Common myeloid progenitor, CD34-positive (primary cell): ENCODE measurements at regions of chr18 and their contacts with region 1.

Region 1: DNA sequence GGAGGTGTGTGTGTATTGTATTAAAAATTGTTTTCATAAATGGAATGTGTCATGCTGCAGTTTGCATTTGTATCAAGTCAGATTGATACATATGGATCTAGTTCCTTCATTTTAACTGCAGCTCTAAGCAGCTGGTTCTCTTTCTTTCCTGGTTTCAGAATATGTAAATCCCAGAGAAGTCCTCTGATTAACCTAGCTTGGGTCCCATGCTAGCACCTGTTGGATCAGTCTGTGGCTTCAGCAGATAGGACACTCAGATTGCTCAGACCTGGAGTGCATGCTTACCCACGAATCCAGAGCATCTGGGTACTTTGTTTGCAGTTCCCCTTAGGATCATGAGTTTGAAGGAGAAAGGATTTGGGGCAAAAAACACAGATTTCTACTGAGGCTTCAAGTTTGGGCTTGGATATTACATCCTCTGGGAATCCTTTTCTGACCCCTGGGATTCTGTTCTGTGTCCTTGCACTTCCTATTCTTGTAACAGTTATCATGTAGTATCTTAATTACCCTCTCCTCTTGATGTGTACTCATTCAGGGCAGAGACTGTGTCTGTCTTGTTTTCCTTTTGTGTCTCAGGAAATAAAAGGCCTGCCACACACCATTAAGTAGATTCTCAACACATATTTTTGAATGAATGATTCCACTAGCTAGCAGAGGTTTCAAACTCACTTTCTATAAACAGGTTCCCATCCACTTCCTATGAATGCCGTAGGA is 142.1 kb downstream of the PHLPP1 start:
- DNase-seq: no peak
- H3K4me3 ChIP-seq: no peak overlapping the region
- H3K27ac ChIP-seq: no peak overlapping the region
- H3K4me1 ChIP-seq: peaks cover 0 to 28% (median 13%) of the 10 kb centered on the region in 4 experiments
- H3K27me3 ChIP-seq: no peaks in the 10 kb centered on the region

Region 2: GRCh38 chr18:62584241-62585120 is 272.9 kb before region 1 on chr18:
- CTCF ChIA-PET with region 1: no interaction called
- POLR2A ChIA-PET with region 1: no interaction called
- DNase-seq: peak; percentile 92 to 96 (median 94)
- H3K4me3 ChIP-seq: peak overlapping the region in 5 of 7 experiments; percentile 46 to 79 (median 57)
- H3K27ac ChIP-seq: no peak overlapping the region
- H3K4me1 ChIP-seq: peaks cover 0 to 20% (median 13%) of the 10 kb centered on the region in 4 experiments
- H3K27me3 ChIP-seq: no peaks in the 10 kb centered on the region

Region 3: GRCh38 chr18:62714671-62715435 is 142.6 kb before region 1 on chr18:
- CTCF ChIA-PET with region 1: no interaction called
- POLR2A ChIA-PET with region 1: no interaction called
- DNase-seq: peak; percentile 100
- H3K4me3 ChIP-seq: peak overlapping the region; percentile 58 to 95 (median 85)
- H3K27ac ChIP-seq: peak overlapping the region; percentile 70 to 72
- H3K4me1 ChIP-seq: peaks cover 13 to 36% (median 25%) of the 10 kb centered on the region in 4 experiments
- H3K27me3 ChIP-seq: no peaks in the 10 kb centered on the region

Region 4: DNA sequence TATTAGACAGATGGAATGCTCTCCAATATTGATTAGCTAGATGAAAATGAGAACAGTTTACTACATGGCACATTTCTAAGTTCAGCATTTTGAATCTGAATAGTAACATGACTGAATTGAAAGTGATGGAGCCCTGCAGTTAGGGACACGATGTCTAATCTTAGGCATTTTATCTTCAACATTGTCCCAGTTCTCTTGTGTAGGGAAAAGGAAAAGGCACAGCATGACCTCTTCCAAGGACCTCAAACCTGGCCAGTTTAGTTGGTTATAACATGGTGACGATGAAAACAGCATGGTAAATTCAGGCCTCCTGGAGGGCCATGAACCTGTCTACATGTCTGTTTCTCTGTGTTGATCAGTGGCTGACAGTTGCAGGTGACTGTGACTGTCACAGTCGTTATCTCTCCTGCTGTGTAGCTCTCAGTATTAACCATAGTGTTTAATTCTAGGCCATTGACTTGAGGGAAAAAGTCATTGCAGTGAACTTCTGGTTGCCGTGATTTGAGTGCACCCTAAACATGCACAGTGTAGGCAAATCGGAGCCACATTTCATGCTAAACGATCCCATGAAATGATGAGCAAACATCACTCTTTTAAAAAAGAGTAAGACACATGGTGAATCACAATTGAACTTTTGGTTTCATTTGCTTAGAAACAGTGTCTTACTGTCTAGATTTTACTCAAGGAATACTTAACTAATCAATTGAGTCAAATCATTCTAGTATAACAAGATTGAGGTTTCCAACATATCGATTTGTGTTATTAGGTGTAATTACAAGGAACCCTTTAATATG is 12.4 kb before region 1 on chr18:
- CTCF ChIA-PET with region 1: interaction called, 12 read pairs
- POLR2A ChIA-PET with region 1: interaction called, 3 read pairs
- DNase-seq: no peak
- H3K4me3 ChIP-seq: no peak overlapping the region
- H3K27ac ChIP-seq: no peak overlapping the region
- H3K4me1 ChIP-seq: peaks cover 0 to 3% (median 0%) of the 10 kb centered on the region in 4 experiments
- H3K27me3 ChIP-seq: no peaks in the 10 kb centered on the region